ENCODE measurements at regions of chr7 and their contacts with region 1.

Region 1: GRCh38 chr7:93147363-93147762 is 822 bp downstream of the SAMD9L start:
- DNase-seq: peak; percentile 43
- ATAC-seq: peak; percentile 67
- H3K4me3 ChIP-seq: peak overlapping the region; percentile 43 to 93 (median 62)
- H3K4me3 Mint-ChIP-seq: peak overlapping the region; percentile 90
- H3K27ac ChIP-seq: peak overlapping the region in 1 of 2 donors; percentile 85
- H3K27ac Mint-ChIP-seq: peak overlapping the region; percentile 85
- H3K4me1 ChIP-seq: peaks cover 40 to 47% of the 10 kb centered on the region in 2 donors
- H3K4me1 Mint-ChIP-seq: peaks cover 48% of the 10 kb centered on the region
- H3K27me3 ChIP-seq: no peaks in the 10 kb centered on the region
- H3K27me3 Mint-ChIP-seq: no peaks in the 10 kb centered on the region
- CTCF ChIP-seq: no peak

Region 2: DNA sequence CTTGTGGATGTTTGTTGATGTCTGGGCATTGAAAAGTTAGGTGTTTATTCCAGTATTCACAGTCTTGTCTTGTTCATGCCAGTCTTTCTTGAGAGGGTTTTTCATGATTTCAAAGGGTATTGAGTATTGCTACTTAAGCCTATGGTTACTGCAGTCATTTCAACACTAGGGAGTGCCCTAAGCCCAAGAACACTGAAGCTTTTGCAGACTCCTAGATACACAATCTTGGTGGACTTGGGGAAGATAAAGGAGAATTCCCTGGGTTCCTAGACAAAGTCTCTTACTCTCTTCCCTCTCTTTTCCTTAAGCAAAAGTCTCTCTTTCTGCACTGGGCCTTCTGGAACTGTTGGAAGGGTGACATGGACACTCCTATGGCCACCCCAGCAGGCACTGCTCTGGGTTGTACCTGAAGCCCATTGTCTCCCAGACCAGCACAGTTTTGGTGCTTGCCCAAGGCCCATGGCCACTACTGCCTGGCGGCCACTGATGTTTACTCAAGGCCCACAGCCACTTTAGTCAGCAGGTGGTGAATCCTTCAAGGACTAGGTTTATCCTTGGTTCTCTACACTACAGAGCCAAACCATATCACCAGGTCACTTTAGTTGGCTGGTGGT is 54.5 kb before region 1 on chr7:
- CTCF ChIA-PET with region 1: no interaction called
- POLR2A ChIA-PET with region 1: no interaction called
- intact Hi-C with region 1: loop called (anchors 5 kb)
- DNase-seq: peak; percentile 20
- ATAC-seq: no peak
- H3K4me3 ChIP-seq: no peak overlapping the region
- H3K4me3 Mint-ChIP-seq: no peak overlapping the region
- H3K27ac ChIP-seq: no peak overlapping the region
- H3K27ac Mint-ChIP-seq: no peak overlapping the region
- H3K4me1 ChIP-seq: no peaks in the 10 kb centered on the region
- H3K4me1 Mint-ChIP-seq: no peaks in the 10 kb centered on the region
- H3K27me3 ChIP-seq: peaks cover 0 to 6% (median 1%) of the 10 kb centered on the region in 4 experiments
- H3K27me3 Mint-ChIP-seq: peaks cover 20% of the 10 kb centered on the region
- CTCF ChIP-seq: peak; percentile 11

Region 3: GRCh38 chr7:93165447-93165846 is 18.1 kb after region 1 on chr7:
- CTCF ChIA-PET with region 1: no interaction called
- POLR2A ChIA-PET with region 1: interaction called, 5 read pairs
- intact Hi-C with region 1: loop called (anchors 1 kb)
- DNase-seq: peak; percentile 77
- ATAC-seq: peak; percentile 93
- H3K4me3 ChIP-seq: peak overlapping the region in 2 of 5 experiments; percentile 5 to 15
- H3K4me3 Mint-ChIP-seq: peak overlapping the region; percentile 38
- H3K27ac ChIP-seq: peak overlapping the region; percentile 59 to 81
- H3K27ac Mint-ChIP-seq: peak overlapping the region; percentile 74
- H3K4me1 ChIP-seq: peaks cover 4 to 8% of the 10 kb centered on the region in 2 donors
- H3K4me1 Mint-ChIP-seq: peaks cover 19% of the 10 kb centered on the region
- H3K27me3 ChIP-seq: no peaks in the 10 kb centered on the region
- H3K27me3 Mint-ChIP-seq: no peaks in the 10 kb centered on the region
- CTCF ChIP-seq: no peak

Region 4: GRCh38 chr7:93828260-93828659 is 680.9 kb after region 1 on chr7:
- CTCF ChIA-PET with region 1: no interaction called
- POLR2A ChIA-PET with region 1: no interaction called
- intact Hi-C with region 1: no loop called
- DNase-seq: no peak
- ATAC-seq: no peak
- H3K4me3 ChIP-seq: no peak overlapping the region
- H3K4me3 Mint-ChIP-seq: no peak overlapping the region
- H3K27ac ChIP-seq: no peak overlapping the region
- H3K27ac Mint-ChIP-seq: no peak overlapping the region
- H3K4me1 ChIP-seq: no peaks in the 10 kb centered on the region
- H3K4me1 Mint-ChIP-seq: no peaks in the 10 kb centered on the region
- H3K27me3 ChIP-seq: no peaks in the 10 kb centered on the region
- H3K27me3 Mint-ChIP-seq: peaks cover 3% of the 10 kb centered on the region
- CTCF ChIP-seq: no peak